ENCODE measurements at regions of chr2 and their contacts with region 1.

Region 1: DNA sequence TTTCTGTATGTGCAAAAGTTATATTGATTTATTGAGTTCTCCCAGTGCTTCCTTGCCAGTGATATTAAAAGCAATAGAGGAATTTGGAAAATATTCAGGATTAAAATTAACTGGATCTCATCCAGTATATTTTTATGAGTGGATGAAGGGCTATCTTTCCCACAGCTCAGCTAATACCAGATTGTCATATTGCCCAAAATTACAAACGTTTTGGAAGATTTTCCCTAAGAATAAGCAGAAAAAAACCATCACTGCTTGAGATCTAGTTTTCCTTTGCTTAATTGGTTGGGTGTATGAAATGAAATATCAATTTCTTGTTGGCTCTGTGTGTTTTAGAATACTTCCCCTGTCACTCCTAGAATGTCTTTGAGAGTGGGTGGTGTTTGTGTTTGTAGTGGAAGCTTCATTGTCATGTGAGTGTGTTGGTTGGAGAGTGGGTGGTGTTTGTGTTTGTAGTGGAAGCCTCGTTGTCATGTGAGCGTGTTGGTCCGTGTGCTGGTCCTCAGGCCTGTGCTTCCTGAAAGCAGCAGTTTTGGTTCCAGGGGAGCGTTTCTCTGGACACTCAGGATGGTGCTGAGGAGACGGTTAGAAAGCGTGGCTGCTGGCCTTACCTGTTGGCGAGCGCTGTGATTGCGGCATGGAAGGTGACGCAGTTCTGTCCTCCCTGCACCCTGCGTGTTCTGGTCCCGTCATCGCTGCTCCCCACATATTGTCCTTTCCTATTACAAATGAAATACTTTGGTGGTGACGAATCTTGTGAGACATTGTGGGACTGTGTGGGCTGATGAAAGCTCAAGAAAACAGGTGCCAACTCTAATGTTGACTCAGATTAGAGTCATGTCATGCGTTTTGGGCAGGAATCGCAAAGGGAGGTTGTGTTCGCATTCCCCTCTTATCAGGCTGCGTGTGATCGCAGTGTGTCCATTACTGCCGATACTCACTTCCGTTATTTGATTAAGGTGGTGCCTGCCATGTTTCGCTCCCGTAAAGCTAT is 12.4 kb downstream of the ASB1 start:
- DNase-seq: peak; percentile 99
- H3K4me3 Mint-ChIP-seq: peak overlapping the region; percentile 54
- H3K27ac Mint-ChIP-seq: peak overlapping the region; percentile 99
- H3K4me1 Mint-ChIP-seq: peaks cover 32% of the 10 kb centered on the region
- H3K27me3 Mint-ChIP-seq: no peaks in the 10 kb centered on the region
- CTCF ChIP-seq: no peak

Region 2: GRCh38 chr2:238389926-238390597 is 49.1 kb before region 1 on chr2:
- CTCF ChIA-PET with region 1: interaction called, 4 read pairs
- POLR2A ChIA-PET with region 1: interaction called, 35 read pairs
- intact Hi-C with region 1: no loop called
- DNase-seq: peak; percentile 46
- H3K4me3 Mint-ChIP-seq: peak overlapping the region; percentile 1
- H3K27ac Mint-ChIP-seq: peak overlapping the region; percentile 86
- H3K4me1 Mint-ChIP-seq: peaks cover 6% of the 10 kb centered on the region
- H3K27me3 Mint-ChIP-seq: no peaks in the 10 kb centered on the region
- CTCF ChIP-seq: no peak

Region 3: GRCh38 chr2:238404406-238405216 is 34.5 kb before region 1 on chr2:
- CTCF ChIA-PET with region 1: no interaction called
- POLR2A ChIA-PET with region 1: no interaction called
- intact Hi-C with region 1: no loop called
- DNase-seq: no peak
- H3K4me3 Mint-ChIP-seq: no peak overlapping the region
- H3K27ac Mint-ChIP-seq: no peak overlapping the region
- H3K4me1 Mint-ChIP-seq: no peaks in the 10 kb centered on the region
- H3K27me3 Mint-ChIP-seq: no peaks in the 10 kb centered on the region
- CTCF ChIP-seq: no peak

Region 4: GRCh38 chr2:238426568-238427434 is 12.4 kb before region 1 on chr2 and contains the start of gene ASB1:
- CTCF ChIA-PET with region 1: interaction called, 4 read pairs
- POLR2A ChIA-PET with region 1: interaction called, 19 read pairs
- intact Hi-C with region 1: loop called (anchors 1 kb)
- DNase-seq: peak; percentile 82
- H3K4me3 Mint-ChIP-seq: peak within 1 kb of the TSS; percentile 79
- H3K27ac Mint-ChIP-seq: peak within 1 kb of the TSS; percentile 71
- H3K4me1 Mint-ChIP-seq: peaks cover 22% of the 10 kb centered on the region
- H3K27me3 Mint-ChIP-seq: no peaks in the 10 kb centered on the region
- CTCF ChIP-seq: no peak
- total RNA-seq, gene ASB1: 104 and 113 TPM in 2 replicates

Region 5: GRCh38 chr2:238484522-238485452 is 45.6 kb after region 1 on chr2:
- CTCF ChIA-PET with region 1: no interaction called
- POLR2A ChIA-PET with region 1: no interaction called
- intact Hi-C with region 1: no loop called
- DNase-seq: no peak
- H3K4me3 Mint-ChIP-seq: no peak overlapping the region
- H3K27ac Mint-ChIP-seq: no peak overlapping the region
- H3K4me1 Mint-ChIP-seq: no peaks in the 10 kb centered on the region
- H3K27me3 Mint-ChIP-seq: no peaks in the 10 kb centered on the region
- CTCF ChIP-seq: no peak

Measured in MCF 10A (cell line).